Activated naive CD4-positive, alpha-beta T cell treated with anti-CD3 and anti-CD28 coated beads, Interleukin-2, amount 10 ng/mL, durations not matched to agents 7 days and 5 days (primary cell): ENCODE measurements at regions of chr20 and their contacts with region 1.

Region 1: DNA sequence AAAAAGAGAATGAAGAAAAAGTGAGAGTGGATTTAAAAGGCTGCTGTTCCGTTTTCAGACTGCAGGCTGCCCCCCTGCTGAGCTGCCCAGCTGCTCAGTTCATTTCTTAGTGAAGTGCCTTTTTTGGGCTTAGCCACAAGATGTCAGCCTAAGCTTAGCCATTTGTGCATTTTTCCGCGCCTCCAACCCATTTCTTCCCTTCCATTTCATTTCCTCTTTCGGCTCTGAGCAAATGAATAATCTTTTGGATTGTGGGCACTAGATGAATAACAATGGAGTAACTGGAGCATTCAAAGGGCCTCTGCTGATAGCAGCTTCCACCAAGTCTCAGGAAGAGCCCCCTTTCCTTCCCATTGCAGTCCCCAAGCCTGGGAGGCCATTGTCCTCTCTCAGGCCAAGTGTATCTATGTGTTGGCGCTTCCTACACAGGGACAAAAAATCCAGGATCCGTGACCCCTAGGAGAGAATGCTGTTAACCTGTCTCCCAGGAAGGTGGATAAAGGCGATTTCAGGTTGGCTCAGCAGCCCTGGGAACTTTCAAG is 83.5 kb upstream of the SPTLC3 start:
- DNase-seq: peak; percentile 44
- H3K4me3 Mint-ChIP-seq: no peak overlapping the region
- H3K27ac Mint-ChIP-seq: no peak overlapping the region
- H3K4me1 Mint-ChIP-seq: no peaks in the 10 kb centered on the region
- H3K27me3 Mint-ChIP-seq: no peaks in the 10 kb centered on the region

Region 2: DNA sequence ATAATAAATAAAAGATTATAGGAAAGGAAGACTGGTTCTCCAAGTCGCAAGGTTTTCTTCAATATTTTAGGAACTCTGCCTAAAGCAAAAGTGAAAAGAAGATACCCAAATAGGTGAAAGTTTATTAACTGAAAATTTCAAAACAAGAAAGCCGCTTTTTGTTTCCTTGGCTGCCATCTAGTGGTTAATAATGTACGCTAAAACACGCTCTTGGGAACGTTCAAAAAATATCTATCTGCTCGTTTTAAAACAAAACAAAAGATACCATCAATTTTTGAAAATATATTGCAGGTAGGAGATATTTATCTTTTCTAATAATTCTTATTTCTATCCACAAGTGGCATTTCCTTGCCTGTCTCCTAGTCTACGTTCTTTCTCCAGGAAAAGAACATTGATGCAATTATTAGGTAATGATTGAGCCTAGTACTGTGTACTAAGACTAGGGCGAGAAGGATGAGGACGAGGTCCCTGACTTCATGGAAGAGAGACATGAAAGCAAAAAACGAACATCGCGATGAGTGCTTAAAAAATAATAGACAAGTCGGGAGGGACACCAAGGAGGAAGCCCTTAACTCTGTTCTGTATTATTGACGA is 180.7 kb after region 1 on chr20:
- CTCF ChIA-PET with region 1: interaction called, 16 read pairs
- DNase-seq: no peak
- H3K4me3 Mint-ChIP-seq: no peak overlapping the region
- H3K27ac Mint-ChIP-seq: no peak overlapping the region
- H3K4me1 Mint-ChIP-seq: no peaks in the 10 kb centered on the region
- H3K27me3 Mint-ChIP-seq: peaks cover 3% of the 10 kb centered on the region